WTC11 (cell line): ENCODE measurements at regions of chr6 and their contacts with region 1.

Region 1: DNA sequence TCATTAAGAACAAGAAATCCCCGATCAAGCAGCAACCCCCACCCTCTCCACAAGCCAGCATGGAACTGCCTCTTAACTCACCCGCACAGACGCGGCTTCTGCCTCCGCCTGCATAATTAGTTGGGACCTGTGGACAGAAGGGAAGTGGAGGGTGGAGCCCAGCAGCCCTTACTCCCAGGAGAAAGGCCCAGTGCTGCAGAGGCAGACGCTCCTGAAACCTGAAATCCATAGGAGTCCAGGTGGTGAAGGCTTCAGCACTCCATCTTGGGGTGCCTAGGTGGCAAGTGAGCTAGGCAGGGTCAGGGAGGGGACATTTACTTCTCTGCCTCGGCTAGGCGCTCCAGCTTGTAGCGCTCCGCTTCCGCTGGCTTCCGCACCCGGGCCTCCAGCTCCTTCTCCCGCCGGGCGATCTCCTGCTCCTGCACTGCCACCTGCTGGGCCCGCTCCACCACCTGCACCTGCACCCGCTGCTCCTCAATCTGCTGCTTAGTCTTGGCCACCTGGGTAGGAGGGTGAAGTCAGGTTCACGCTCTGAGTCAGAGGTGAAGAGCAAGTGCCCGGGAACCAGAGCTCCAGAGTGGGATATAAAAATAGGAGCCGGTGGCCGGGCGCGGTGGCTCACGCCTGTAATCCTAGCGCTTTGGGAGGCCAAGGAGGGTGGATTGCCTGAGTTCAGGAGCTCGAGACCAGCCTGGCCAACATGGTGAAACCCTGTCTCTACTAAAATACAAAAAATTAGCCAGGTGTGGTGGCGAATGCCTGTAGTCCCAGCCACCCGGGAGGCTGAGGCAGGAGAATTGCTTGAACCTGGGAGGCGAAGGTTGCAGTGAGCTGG is 10.7 kb downstream of the TUBB start:
- DNase-seq: peak; percentile 88
- ATAC-seq: peak; percentile 65
- H3K4me3 Mint-ChIP-seq: no peak overlapping the region
- H3K27ac Mint-ChIP-seq: peak overlapping the region; percentile 36; the same call in 1 of the 2 replicates
- H3K4me1 Mint-ChIP-seq: peaks cover 3% of the 10 kb centered on the region; the same call in 1 of the 2 replicates
- H3K27me3 Mint-ChIP-seq: no peaks in the 10 kb centered on the region
- CTCF ChIP-seq: peak; percentile 19; the same call in 1 of the 2 replicates

Region 2: GRCh38 chr6:30614843-30615218 is 116.0 kb before region 1 on chr6:
- CTCF ChIA-PET with region 1: interaction called, 15 read pairs
- POLR2A ChIA-PET with region 1: no interaction called
- DNase-seq: peak; percentile 76
- ATAC-seq: peak; percentile 63
- H3K4me3 Mint-ChIP-seq: peak overlapping the region; percentile 96
- H3K27ac Mint-ChIP-seq: peak overlapping the region; percentile 100
- H3K4me1 Mint-ChIP-seq: peaks cover 42% of the 10 kb centered on the region
- H3K27me3 Mint-ChIP-seq: no peaks in the 10 kb centered on the region; the same call in 1 of the 2 replicates
- CTCF ChIP-seq: no peak

Region 3: GRCh38 chr6:30678964-30679726 is 51.7 kb before region 1 on chr6:
- CTCF ChIA-PET with region 1: interaction called, 131 read pairs
- POLR2A ChIA-PET with region 1: interaction called, 8 read pairs
- DNase-seq: peak; percentile 94
- ATAC-seq: peak; percentile 83
- H3K4me3 Mint-ChIP-seq: peak overlapping the region; percentile 61
- H3K27ac Mint-ChIP-seq: no peak overlapping the region
- H3K4me1 Mint-ChIP-seq: peaks cover 38% of the 10 kb centered on the region
- H3K27me3 Mint-ChIP-seq: no peaks in the 10 kb centered on the region
- CTCF ChIP-seq: peak; percentile 93

Region 4: GRCh38 chr6:30717042-30717844 is 13.6 kb before region 1 on chr6 and contains the start of gene MDC1:
- CTCF ChIA-PET with region 1: interaction called, 30 read pairs
- POLR2A ChIA-PET with region 1: interaction called, 8 read pairs
- DNase-seq: peak; percentile 99
- ATAC-seq: peak; percentile 77
- H3K4me3 Mint-ChIP-seq: peak within 1 kb of the TSS; percentile 99
- H3K27ac Mint-ChIP-seq: peak within 1 kb of the TSS; percentile 100
- H3K4me1 Mint-ChIP-seq: peaks cover 29% of the 10 kb centered on the region
- H3K27me3 Mint-ChIP-seq: no peaks in the 10 kb centered on the region
- CTCF ChIP-seq: no peak
- total RNA-seq, gene MDC1: 95.9 to 100 TPM (median 97.9 TPM) in 3 replicates

Region 5: GRCh38 chr6:30883685-30884520 is 153.1 kb after region 1 on chr6 and contains the start of gene DDR1:
- CTCF ChIA-PET with region 1: interaction called, 10 read pairs
- POLR2A ChIA-PET with region 1: interaction called, 6 read pairs
- DNase-seq: peak; percentile 58
- ATAC-seq: peak; percentile 4
- H3K4me3 Mint-ChIP-seq: peak within 1 kb of the TSS; percentile 93
- H3K27ac Mint-ChIP-seq: peak within 1 kb of the TSS; percentile 99
- H3K4me1 Mint-ChIP-seq: peaks cover 71% of the 10 kb centered on the region
- H3K27me3 Mint-ChIP-seq: no peaks in the 10 kb centered on the region
- CTCF ChIP-seq: no peak
- total RNA-seq, gene DDR1: 195 to 230 TPM (median 203 TPM) in 3 replicates